Activated naive CD4-positive, alpha-beta T cell treated with anti-CD3 and anti-CD28 coated beads for 36 hours (primary cell): ENCODE measurements at regions of chr5 and their contacts with region 1.

Region 1: GRCh38 chr5:122192497-122193496 is 63.5 kb downstream of the ZNF474 start:
- DNase-seq: peak; percentile 20
- H3K4me3 Mint-ChIP-seq: no peak overlapping the region
- H3K27ac Mint-ChIP-seq: no peak overlapping the region
- H3K4me1 Mint-ChIP-seq: no peaks in the 10 kb centered on the region
- H3K27me3 Mint-ChIP-seq: peaks cover 42% of the 10 kb centered on the region

Region 2: GRCh38 chr5:122415030-122415800 is 222.4 kb after region 1 on chr5:
- CTCF ChIA-PET with region 1: no interaction called
- intact Hi-C with region 1: loop called (anchors 1 kb)
- DNase-seq: peak; percentile 26
- H3K4me3 Mint-ChIP-seq: no peak overlapping the region
- H3K27ac Mint-ChIP-seq: no peak overlapping the region
- H3K4me1 Mint-ChIP-seq: no peaks in the 10 kb centered on the region
- H3K27me3 Mint-ChIP-seq: no peaks in the 10 kb centered on the region

Region 3: DNA sequence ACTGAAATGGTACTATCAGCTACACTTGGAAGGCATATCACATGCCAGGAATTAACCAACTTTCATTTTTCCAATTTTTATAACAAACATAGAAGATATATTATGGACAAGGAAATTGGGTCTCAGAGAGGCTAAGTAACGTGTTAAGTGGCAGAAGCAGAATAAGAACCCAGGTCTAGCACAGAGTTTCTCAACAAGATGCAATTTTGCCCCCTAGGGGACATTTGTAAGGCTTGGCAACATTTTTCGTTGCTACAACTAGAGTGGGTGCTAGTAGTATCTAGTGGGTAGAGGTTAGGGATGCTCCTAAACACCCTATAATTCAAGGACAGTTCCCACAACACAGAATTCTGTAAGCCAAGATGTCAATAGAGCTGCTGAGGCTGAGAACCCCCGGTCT is 299.9 kb after region 1 on chr5:
- CTCF ChIA-PET with region 1: interaction called, 3 read pairs
- intact Hi-C with region 1: loop called (anchors 5 kb)
- DNase-seq: no peak
- H3K4me3 Mint-ChIP-seq: no peak overlapping the region
- H3K27ac Mint-ChIP-seq: no peak overlapping the region
- H3K4me1 Mint-ChIP-seq: no peaks in the 10 kb centered on the region
- H3K27me3 Mint-ChIP-seq: peaks cover 3% of the 10 kb centered on the region

Region 4: GRCh38 chr5:122896598-122897282 is 703.9 kb after region 1 on chr5:
- CTCF ChIA-PET with region 1: no interaction called
- intact Hi-C with region 1: loop called (anchors 10 kb)
- DNase-seq: no peak
- H3K4me3 Mint-ChIP-seq: no peak overlapping the region
- H3K27ac Mint-ChIP-seq: no peak overlapping the region
- H3K4me1 Mint-ChIP-seq: no peaks in the 10 kb centered on the region
- H3K27me3 Mint-ChIP-seq: no peaks in the 10 kb centered on the region